Heart left ventricle (tissue), 16 donors: ENCODE measurements at regions of chr9 and their contacts with region 1.

Region 1: DNA sequence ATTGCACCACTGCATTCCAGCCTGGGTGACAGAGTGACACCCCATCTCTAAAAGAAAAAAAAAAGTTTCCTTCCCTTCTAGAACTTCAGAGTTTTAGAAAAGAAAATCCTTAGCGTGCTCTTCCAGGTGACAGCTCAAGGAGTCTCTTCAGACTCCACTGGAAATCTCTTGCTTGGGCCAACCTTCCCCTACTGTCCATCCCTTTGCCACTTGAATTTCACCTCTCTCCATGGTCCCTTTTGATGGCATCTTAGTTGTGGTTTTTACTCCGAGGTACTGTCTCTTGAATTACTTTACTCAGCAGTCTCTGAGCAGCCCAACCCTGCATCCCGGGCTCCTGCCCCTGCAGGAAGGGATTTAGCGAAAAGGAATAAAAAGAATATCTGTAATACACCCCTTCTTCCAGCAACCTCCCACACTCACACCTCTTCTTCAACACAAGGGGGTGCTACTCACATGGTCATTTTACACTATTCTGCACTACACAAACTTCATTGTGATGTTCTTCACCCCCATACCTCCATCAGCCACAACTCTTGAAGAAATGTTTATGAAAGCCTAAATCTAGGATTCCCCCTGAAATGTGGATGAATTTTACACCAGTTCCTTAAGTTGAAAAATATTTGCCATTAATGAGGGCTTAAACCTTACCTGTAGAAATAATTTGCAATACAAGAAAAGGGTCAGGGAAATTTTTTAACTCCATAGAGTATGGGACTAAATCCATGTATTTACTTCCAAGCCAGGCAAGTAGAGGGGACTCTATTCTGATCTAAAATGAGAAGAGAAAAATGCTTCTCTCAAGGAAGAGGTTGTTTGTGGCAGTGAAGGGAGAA is 25.9 kb downstream of the TPD52L3 start:
- DNase-seq: peak in 1 of 5 donors; percentile 11
- ATAC-seq: peak; percentile 61 to 86 (median 81)
- H3K4me3 ChIP-seq: no peak overlapping the region
- H3K27ac ChIP-seq: no peak overlapping the region
- H3K4me1 ChIP-seq: no peaks in the 10 kb centered on the region
- H3K27me3 ChIP-seq: peaks cover 0 to 5% (median 0%) of the 10 kb centered on the region in 9 donors
- CTCF ChIP-seq: peak; percentile 64 to 83 (median 74)
- POLR2A ChIP-seq: no peak

Region 2: GRCh38 chr9:6405371-6405770 is 51.3 kb after region 1 on chr9:
- intact Hi-C with region 1: no loop called
- DNase-seq: no peak
- ATAC-seq: no peak
- H3K4me3 ChIP-seq: no peak overlapping the region
- H3K27ac ChIP-seq: no peak overlapping the region
- H3K4me1 ChIP-seq: no peaks in the 10 kb centered on the region
- H3K27me3 ChIP-seq: peaks cover 0 to 5% (median 0%) of the 10 kb centered on the region in 9 donors
- CTCF ChIP-seq: no peak
- POLR2A ChIP-seq: no peak

Region 3: GRCh38 chr9:6498982-6499381 is 144.9 kb after region 1 on chr9:
- intact Hi-C with region 1: loop called in 3 of 10 experiments (anchors 10 kb)
- DNase-seq: no peak
- ATAC-seq: no peak
- H3K4me3 ChIP-seq: no peak overlapping the region
- H3K27ac ChIP-seq: no peak overlapping the region
- H3K4me1 ChIP-seq: peaks cover 0 to 6% (median 0%) of the 10 kb centered on the region in 12 donors
- H3K27me3 ChIP-seq: no peaks in the 10 kb centered on the region
- CTCF ChIP-seq: no peak
- POLR2A ChIP-seq: no peak

Region 4: DNA sequence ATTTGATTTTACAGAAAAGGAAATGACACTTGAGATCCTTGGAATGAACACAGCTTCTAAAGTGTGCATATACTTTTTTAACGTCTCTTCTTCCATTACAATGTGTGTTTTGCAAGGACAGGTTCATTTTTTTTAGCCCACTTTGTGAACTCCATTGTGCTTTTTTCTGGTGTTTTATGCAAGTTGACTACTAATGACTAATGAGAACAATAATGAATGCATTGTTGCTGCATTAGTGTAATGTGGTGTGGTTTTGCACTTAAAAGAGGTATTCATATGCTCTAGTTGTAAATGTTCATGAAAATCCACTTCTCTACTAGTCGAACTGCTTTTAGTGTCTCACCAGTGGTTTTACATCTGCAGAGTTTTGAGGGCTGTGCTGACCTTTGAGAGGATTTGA is 152.5 kb after region 1 on chr9:
- intact Hi-C with region 1: loop called in 1 of 10 experiments (anchors 10 kb)
- DNase-seq: no peak
- ATAC-seq: no peak
- H3K4me3 ChIP-seq: no peak overlapping the region
- H3K27ac ChIP-seq: no peak overlapping the region
- H3K4me1 ChIP-seq: peaks cover 0 to 5% (median 0%) of the 10 kb centered on the region in 12 donors
- H3K27me3 ChIP-seq: no peaks in the 10 kb centered on the region
- CTCF ChIP-seq: no peak
- POLR2A ChIP-seq: no peak

Region 5: GRCh38 chr9:6566409-6567139 is 212.5 kb after region 1 on chr9:
- intact Hi-C with region 1: loop called (anchors 1 to 5 kb)
- DNase-seq: no peak
- ATAC-seq: peak in 3 of 4 donors; percentile 35 to 61 (median 52)
- H3K4me3 ChIP-seq: peak overlapping the region in 1 of 12 donors; percentile 11
- H3K27ac ChIP-seq: peak overlapping the region in 1 of 12 donors; percentile 65
- H3K4me1 ChIP-seq: peaks cover 0 to 42% (median 0%) of the 10 kb centered on the region in 12 donors
- H3K27me3 ChIP-seq: peaks cover 0 to 8% (median 0%) of the 10 kb centered on the region in 9 donors
- CTCF ChIP-seq: no peak
- POLR2A ChIP-seq: no peak

Region 6: GRCh38 chr9:6667633-6668280 is 313.7 kb after region 1 on chr9:
- intact Hi-C with region 1: loop called in 6 of 10 experiments (anchors 5 to 10 kb)
- DNase-seq: no peak
- ATAC-seq: no peak
- H3K4me3 ChIP-seq: no peak overlapping the region
- H3K27ac ChIP-seq: no peak overlapping the region
- H3K4me1 ChIP-seq: no peaks in the 10 kb centered on the region
- H3K27me3 ChIP-seq: no peaks in the 10 kb centered on the region
- CTCF ChIP-seq: peak; percentile 25 to 65 (median 48)
- POLR2A ChIP-seq: no peak

Region 7: DNA sequence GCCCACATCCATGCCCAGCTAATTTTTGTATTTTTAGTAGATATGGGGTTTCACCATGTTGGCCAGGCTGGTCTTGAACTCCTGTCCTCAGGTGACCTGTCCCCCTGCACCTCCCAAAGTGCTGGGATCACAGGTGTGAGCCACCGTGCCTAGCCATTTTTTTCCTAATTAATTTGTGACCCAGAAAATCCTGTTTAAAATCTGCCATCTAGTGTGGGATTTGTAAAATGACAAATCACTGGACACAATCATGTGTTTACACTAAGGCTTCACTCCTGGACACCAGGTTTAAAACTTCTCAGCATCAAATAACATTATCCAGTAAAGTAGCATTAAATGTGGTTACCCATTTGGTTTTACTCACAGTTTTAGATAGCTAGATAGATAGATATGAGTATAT is 385.1 kb after region 1 on chr9:
- intact Hi-C with region 1: loop called in 1 of 10 experiments (anchors 10 kb)
- DNase-seq: no peak
- ATAC-seq: no peak
- H3K4me3 ChIP-seq: no peak overlapping the region
- H3K27ac ChIP-seq: no peak overlapping the region
- H3K4me1 ChIP-seq: no peaks in the 10 kb centered on the region
- H3K27me3 ChIP-seq: peaks cover 0 to 9% (median 0%) of the 10 kb centered on the region in 9 donors
- CTCF ChIP-seq: peak in 7 of 12 donors; percentile 12 to 39 (median 23)
- POLR2A ChIP-seq: no peak